GM12878 (cell line): ENCODE measurements at regions of chr11 and their contacts with region 1.

Region 1: GRCh38 chr11:116073854-116074837 is 569.9 kb upstream of the CADM1 start:
- DNase-seq: peak; percentile 82
- ATAC-seq: peak; percentile 93
- H3K4me3 ChIP-seq: 0 out of 2 replicates have a peak overlapping the region, but pooled peaks have one; percentile 21
- H3K27ac ChIP-seq: peak overlapping the region; percentile 79
- H3K4me1 ChIP-seq: peaks cover 23% of the 10 kb centered on the region
- H3K27me3 ChIP-seq: no peaks in the 10 kb centered on the region
- CTCF ChIP-seq: peak in 1 of 3 experiments; percentile 17; a peak in 1 of 6 replicates
- EP300 ChIP-seq: peak; percentile 95 to 97
- POLR2A ChIP-seq: no peak; the same call in 1 of the 2 replicates
- RAD21 ChIP-seq: peak; percentile 9; the same call in 1 of the 2 replicates

Region 2: GRCh38 chr11:115334932-115335788 is 739.0 kb before region 1 on chr11:
- CTCF ChIA-PET with region 1: interaction called, 16 read pairs
- POLR2A ChIA-PET with region 1: no interaction called
- RAD21 ChIA-PET with region 1: interaction called, 4 read pairs
- SMC1A ChIA-PET with region 1: interaction called, 3 read pairs
- in situ Hi-C with region 1: no loop called
- intact Hi-C with region 1: loop called (anchors 5 kb)
- DNase-seq: no peak
- ATAC-seq: no peak
- H3K4me3 ChIP-seq: no peak overlapping the region
- H3K27ac ChIP-seq: no peak overlapping the region
- H3K4me1 ChIP-seq: no peaks in the 10 kb centered on the region
- H3K27me3 ChIP-seq: peaks cover 0 to 1% of the 10 kb centered on the region in 2 experiments; a peak in 2 of 4 replicates
- CTCF ChIP-seq: peak; percentile 44 to 64 (median 56); a peak in 5 of 6 replicates
- EP300 ChIP-seq: no peak
- POLR2A ChIP-seq: no peak
- RAD21 ChIP-seq: peak; percentile 73

Region 3: GRCh38 chr11:115912484-115912945 is 161.6 kb before region 1 on chr11:
- CTCF ChIA-PET with region 1: interaction called, 13 read pairs
- POLR2A ChIA-PET with region 1: interaction called, 3 read pairs
- RAD21 ChIA-PET with region 1: interaction called, 9 read pairs
- SMC1A ChIA-PET with region 1: interaction called, 249 read pairs
- in situ Hi-C with region 1: no loop called
- intact Hi-C with region 1: no loop called
- DNase-seq: no peak
- ATAC-seq: peak; percentile 90
- H3K4me3 ChIP-seq: no peak overlapping the region; the same call in 1 of the 2 replicates
- H3K27ac ChIP-seq: peak overlapping the region; percentile 56
- H3K4me1 ChIP-seq: peaks cover 24% of the 10 kb centered on the region
- H3K27me3 ChIP-seq: no peaks in the 10 kb centered on the region
- CTCF ChIP-seq: peak; percentile 42 to 67 (median 48); a peak in 5 of 6 replicates
- EP300 ChIP-seq: no peak
- POLR2A ChIP-seq: no peak
- RAD21 ChIP-seq: peak; percentile 85

Region 4: GRCh38 chr11:115924744-115925567 is 149.2 kb before region 1 on chr11:
- CTCF ChIA-PET with region 1: interaction called, 65 read pairs
- POLR2A ChIA-PET with region 1: interaction called, 42 read pairs
- RAD21 ChIA-PET with region 1: interaction called, 222 read pairs
- SMC1A ChIA-PET with region 1: interaction called, 249 read pairs
- in situ Hi-C with region 1: loop called (anchors 5 kb)
- intact Hi-C with region 1: loop called (anchors 1 kb)
- DNase-seq: peak; percentile 99
- ATAC-seq: peak; percentile 62
- H3K4me3 ChIP-seq: no peak overlapping the region
- H3K27ac ChIP-seq: peak overlapping the region; percentile 95
- H3K4me1 ChIP-seq: peaks cover 97% of the 10 kb centered on the region
- H3K27me3 ChIP-seq: no peaks in the 10 kb centered on the region
- CTCF ChIP-seq: 0 out of 6 replicates have a peak, but pooled peaks of 1 of the 3 experiments have one; percentile 0
- EP300 ChIP-seq: peak; percentile 94 to 95
- POLR2A ChIP-seq: peak; percentile 57; the same call in 1 of the 2 replicates
- RAD21 ChIP-seq: peak; percentile 32

Region 5: GRCh38 chr11:115941481-115941993 is 132.6 kb before region 1 on chr11:
- CTCF ChIA-PET with region 1: interaction called, 6 read pairs
- POLR2A ChIA-PET with region 1: no interaction called
- RAD21 ChIA-PET with region 1: interaction called, 13 read pairs
- SMC1A ChIA-PET with region 1: interaction called, 11 read pairs
- in situ Hi-C with region 1: no loop called
- intact Hi-C with region 1: no loop called
- DNase-seq: no peak
- ATAC-seq: no peak
- H3K4me3 ChIP-seq: no peak overlapping the region
- H3K27ac ChIP-seq: no peak overlapping the region
- H3K4me1 ChIP-seq: peaks cover 7% of the 10 kb centered on the region
- H3K27me3 ChIP-seq: no peaks in the 10 kb centered on the region
- CTCF ChIP-seq: no peak
- EP300 ChIP-seq: no peak
- POLR2A ChIP-seq: no peak
- RAD21 ChIP-seq: no peak

Region 6: DNA sequence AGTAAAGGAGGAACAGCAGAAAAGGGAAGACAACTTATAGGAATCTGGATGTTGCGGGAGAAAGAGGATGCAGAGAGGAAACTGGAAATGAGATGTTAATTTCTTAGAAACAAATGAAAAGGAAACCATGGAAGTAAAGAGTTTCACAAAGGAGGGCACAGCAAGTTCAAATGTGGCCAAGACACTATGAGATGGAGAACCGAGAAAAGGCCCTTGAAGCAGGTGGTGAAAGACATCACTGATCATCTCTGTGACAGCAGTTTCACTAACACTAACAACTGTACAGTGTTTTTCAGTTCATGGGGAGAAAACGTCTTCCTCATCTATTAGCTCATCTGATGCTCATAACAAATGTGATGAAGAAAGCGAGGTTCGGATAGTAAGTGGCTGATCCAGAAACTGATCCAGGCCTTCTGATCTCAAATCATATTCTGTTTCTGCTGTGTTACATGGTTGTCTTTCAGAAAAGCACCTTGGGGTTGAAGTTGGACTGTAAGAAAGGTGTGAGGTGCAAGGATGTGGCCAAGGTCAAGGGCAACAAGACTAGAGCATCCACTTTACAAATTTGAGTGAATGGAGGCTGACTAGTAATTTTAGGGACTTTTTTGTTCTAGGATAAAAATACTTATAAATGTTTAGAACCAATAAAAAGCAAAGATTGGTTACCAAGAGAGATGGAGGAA is 77.9 kb before region 1 on chr11:
- CTCF ChIA-PET with region 1: interaction called, 66 read pairs
- POLR2A ChIA-PET with region 1: interaction called, 9 read pairs
- RAD21 ChIA-PET with region 1: interaction called, 31 read pairs
- SMC1A ChIA-PET with region 1: interaction called, 96 read pairs
- in situ Hi-C with region 1: no loop called
- intact Hi-C with region 1: loop called (anchors 1 kb)
- DNase-seq: peak; percentile 89
- ATAC-seq: peak; percentile 96
- H3K4me3 ChIP-seq: no peak overlapping the region
- H3K27ac ChIP-seq: peak overlapping the region; percentile 79
- H3K4me1 ChIP-seq: peaks cover 25% of the 10 kb centered on the region
- H3K27me3 ChIP-seq: no peaks in the 10 kb centered on the region
- CTCF ChIP-seq: no peak
- EP300 ChIP-seq: peak; percentile 94 to 95; a peak in 3 of 4 replicates
- POLR2A ChIP-seq: no peak
- RAD21 ChIP-seq: no peak

Region 7: DNA sequence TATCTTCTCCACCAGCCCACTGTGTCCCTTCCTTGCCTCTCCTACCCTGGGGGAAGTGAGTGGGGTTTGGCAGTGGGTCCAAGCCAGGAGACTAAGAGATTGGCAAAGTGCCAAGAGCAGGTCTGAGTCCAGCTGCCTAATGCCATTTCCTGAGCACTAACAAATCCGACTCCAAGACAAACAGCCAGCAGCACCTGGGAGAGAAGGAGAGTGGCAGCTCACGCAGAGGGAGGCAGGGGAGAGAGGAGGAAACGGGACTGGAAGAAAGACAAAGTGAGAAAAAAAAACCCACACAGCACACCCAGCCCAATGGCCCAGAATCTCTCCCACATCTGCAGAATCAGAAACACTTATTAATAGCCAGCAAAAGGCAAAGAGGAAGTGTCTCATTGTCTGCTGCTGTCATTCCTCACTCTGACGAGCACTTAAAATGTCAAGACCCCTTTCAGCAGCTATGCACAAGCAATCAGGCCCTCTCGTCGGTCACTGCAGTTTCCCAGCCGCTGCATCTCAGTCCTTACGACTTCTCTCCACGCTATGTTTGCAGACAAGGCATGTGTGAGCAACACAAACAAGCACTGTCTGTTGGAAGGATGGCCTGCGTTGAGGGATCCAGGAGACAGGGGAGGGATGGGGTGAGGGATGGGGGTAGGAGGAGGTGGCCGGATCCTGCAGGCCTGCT is 11.5 kb before region 1 on chr11:
- CTCF ChIA-PET with region 1: interaction called, 5 read pairs
- POLR2A ChIA-PET with region 1: interaction called, 7 read pairs
- RAD21 ChIA-PET with region 1: interaction called, 11 read pairs
- SMC1A ChIA-PET with region 1: interaction called, 17 read pairs
- in situ Hi-C with region 1: no loop called
- intact Hi-C with region 1: no loop called
- DNase-seq: no peak
- ATAC-seq: peak; percentile 69
- H3K4me3 ChIP-seq: no peak overlapping the region
- H3K27ac ChIP-seq: peak overlapping the region; percentile 14; the same call in 1 of the 2 replicates
- H3K4me1 ChIP-seq: peaks cover 29% of the 10 kb centered on the region
- H3K27me3 ChIP-seq: no peaks in the 10 kb centered on the region
- CTCF ChIP-seq: no peak
- EP300 ChIP-seq: no peak
- POLR2A ChIP-seq: no peak
- RAD21 ChIP-seq: no peak